A673 (cell line): ENCODE measurements at regions of chr5 and their contacts with region 1.

Region 1: GRCh38 chr5:143106174-143106573 is 297.3 kb downstream of the NR3C1 start:
- DNase-seq: peak; percentile 60
- H3K4me3 ChIP-seq: no peak overlapping the region
- H3K27ac ChIP-seq: no peak overlapping the region
- H3K4me1 ChIP-seq: no peaks in the 10 kb centered on the region
- H3K27me3 ChIP-seq: no peaks in the 10 kb centered on the region
- CTCF ChIP-seq: peak; percentile 48

Region 2: GRCh38 chr5:142860270-142860669 is 245.9 kb before region 1 on chr5:
- CTCF ChIA-PET with region 1: no interaction called
- POLR2A ChIA-PET with region 1: no interaction called
- intact Hi-C with region 1: no loop called
- DNase-seq: no peak
- H3K4me3 ChIP-seq: no peak overlapping the region
- H3K27ac ChIP-seq: no peak overlapping the region
- H3K4me1 ChIP-seq: peaks cover 8% of the 10 kb centered on the region
- H3K27me3 ChIP-seq: no peaks in the 10 kb centered on the region
- CTCF ChIP-seq: no peak

Region 3: DNA sequence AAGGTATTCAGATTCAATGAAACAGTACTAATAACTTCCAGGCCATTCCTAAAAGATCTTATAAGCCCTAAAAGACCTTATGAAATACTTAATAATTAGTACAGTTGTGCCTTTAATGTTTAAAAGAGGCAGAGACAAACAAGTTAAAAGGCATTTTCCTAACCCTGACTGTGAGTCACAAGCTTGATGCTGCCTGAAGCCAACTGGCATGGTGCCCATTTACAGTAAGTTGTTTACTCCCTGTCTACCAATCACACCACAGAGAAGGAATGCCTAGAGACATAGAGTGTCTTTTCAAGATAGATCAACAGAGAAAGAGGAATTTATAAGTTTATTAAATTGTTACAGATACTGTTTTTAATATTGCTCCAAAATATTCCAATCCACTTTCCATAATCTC is 249.5 kb after region 1 on chr5:
- CTCF ChIA-PET with region 1: no interaction called
- POLR2A ChIA-PET with region 1: no interaction called
- intact Hi-C with region 1: no loop called
- DNase-seq: peak; percentile 80
- H3K4me3 ChIP-seq: no peak overlapping the region
- H3K27ac ChIP-seq: no peak overlapping the region
- H3K4me1 ChIP-seq: peaks cover 7% of the 10 kb centered on the region
- H3K27me3 ChIP-seq: no peaks in the 10 kb centered on the region
- CTCF ChIP-seq: no peak

Region 4: DNA sequence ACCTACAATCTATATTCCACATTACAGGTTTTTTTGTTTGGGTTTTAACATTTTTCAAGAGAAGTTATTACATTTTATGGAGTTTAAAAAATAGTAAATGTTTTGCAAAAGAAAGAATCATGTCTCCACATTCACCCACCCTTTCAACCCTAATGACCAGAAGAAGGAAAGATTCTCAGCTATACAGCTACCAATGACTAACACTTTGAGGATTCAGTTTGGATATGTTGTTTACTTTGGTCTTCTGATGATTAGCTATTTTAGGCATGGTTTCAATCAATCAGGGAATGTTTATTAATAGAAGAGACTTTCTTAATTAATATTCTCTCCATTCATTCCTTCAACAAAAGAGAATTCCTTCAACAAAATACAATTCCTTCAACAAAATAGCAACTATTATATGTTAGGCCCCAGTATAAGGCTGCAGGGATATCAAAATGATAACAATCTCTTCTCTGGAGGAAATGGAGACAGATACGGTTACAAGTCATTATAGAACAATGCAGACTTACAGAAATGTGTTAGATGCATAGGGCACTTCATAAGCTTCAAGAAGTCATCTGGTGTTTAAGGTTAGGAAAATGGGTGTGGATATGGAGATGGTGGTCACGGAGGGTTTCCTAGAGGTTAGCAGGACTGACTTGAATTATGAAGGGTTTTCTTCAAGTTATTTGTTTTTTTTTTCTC is 306.6 kb after region 1 on chr5:
- CTCF ChIA-PET with region 1: interaction called, 10 read pairs
- POLR2A ChIA-PET with region 1: no interaction called
- intact Hi-C with region 1: no loop called
- DNase-seq: no peak
- H3K4me3 ChIP-seq: no peak overlapping the region
- H3K27ac ChIP-seq: no peak overlapping the region
- H3K4me1 ChIP-seq: no peaks in the 10 kb centered on the region
- H3K27me3 ChIP-seq: no peaks in the 10 kb centered on the region
- CTCF ChIP-seq: no peak

Region 5: GRCh38 chr5:143480001-143480400 is 373.8 kb after region 1 on chr5:
- CTCF ChIA-PET with region 1: interaction called, 12 read pairs
- POLR2A ChIA-PET with region 1: no interaction called
- intact Hi-C with region 1: no loop called
- DNase-seq: no peak
- H3K4me3 ChIP-seq: no peak overlapping the region
- H3K27ac ChIP-seq: no peak overlapping the region
- H3K4me1 ChIP-seq: no peaks in the 10 kb centered on the region
- H3K27me3 ChIP-seq: no peaks in the 10 kb centered on the region
- CTCF ChIP-seq: no peak

Region 6: DNA sequence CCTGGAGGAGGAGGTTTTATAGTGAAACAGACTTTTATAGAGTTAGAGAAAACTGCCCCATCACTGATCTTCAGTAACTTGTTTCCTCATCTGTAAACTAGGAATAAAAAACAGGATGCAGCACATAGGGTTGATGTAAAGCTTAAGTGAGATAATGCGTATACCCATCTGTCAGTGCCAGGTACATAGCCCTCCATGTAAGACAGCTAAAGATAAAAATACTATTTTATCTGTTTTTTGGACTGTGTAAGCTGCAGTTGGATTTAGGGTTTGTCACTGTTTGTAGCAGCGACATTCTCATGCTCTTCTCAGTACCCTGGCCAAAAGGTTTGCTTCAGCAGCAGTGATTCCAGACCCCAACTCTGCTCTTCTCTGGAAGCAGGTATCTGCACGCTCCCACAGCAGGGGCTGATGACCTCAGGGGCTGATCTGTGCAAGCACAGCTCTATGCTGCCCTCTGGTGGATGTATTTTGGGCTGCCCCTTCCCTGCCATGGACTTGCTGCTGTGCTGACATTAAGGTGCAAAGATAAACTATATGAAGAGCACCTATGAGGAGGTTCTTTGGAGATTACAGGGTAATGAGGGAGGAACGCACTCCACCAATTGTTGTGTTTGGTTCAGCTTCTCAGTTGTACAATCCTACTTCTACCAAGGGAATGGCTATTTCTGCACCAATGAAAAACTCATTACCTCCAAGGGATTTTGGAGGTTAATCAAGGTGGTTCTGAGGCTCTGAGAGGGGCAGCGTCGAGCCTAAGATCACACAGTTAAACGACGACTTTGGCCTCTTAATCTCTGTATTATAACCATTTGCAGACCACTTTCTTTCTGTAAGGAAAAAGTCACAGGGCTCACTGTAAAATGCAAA is 718.9 kb after region 1 on chr5:
- CTCF ChIA-PET with region 1: interaction called, 3 read pairs
- POLR2A ChIA-PET with region 1: no interaction called
- intact Hi-C with region 1: loop called (anchors 2 kb)
- DNase-seq: peak; percentile 76
- H3K4me3 ChIP-seq: no peak overlapping the region
- H3K27ac ChIP-seq: no peak overlapping the region
- H3K4me1 ChIP-seq: no peaks in the 10 kb centered on the region
- H3K27me3 ChIP-seq: no peaks in the 10 kb centered on the region
- CTCF ChIP-seq: peak; percentile 95

Region 7: DNA sequence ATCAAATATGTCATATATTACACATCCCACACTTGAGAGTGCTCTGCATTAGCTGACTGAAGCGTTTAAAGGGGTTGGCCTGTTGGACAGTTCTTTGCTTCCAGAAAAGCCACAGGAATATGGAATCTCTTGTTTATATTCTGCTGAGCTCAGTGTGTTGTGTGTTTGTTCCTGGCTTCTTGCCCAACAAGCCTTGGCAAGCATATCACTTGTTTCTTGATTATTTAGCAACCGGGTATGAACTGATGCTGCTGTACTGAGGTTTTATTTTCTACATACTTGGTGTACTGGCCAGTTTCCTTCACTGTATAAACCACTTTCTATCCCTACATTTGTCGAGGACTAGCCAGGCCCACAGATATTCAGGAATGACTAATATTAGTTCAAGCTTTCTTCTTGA is 1443.4 kb after region 1 on chr5:
- CTCF ChIA-PET with region 1: no interaction called
- POLR2A ChIA-PET with region 1: no interaction called
- intact Hi-C with region 1: no loop called
- DNase-seq: peak; percentile 4
- H3K4me3 ChIP-seq: no peak overlapping the region
- H3K27ac ChIP-seq: no peak overlapping the region
- H3K4me1 ChIP-seq: no peaks in the 10 kb centered on the region
- H3K27me3 ChIP-seq: no peaks in the 10 kb centered on the region
- CTCF ChIP-seq: no peak